Ascending aorta (tissue), 2 donors: ENCODE measurements at regions of chr6 and their contacts with region 1.

Region 1: GRCh38 chr6:99393698-99394531 is at the start of gene COQ3:
- DNase-seq: peak in 1 of 2 donors; percentile 79
- H3K4me3 ChIP-seq: peak within 1 kb of the TSS; percentile 76 to 98
- H3K27ac ChIP-seq: peak within 1 kb of the TSS; percentile 82 to 92
- H3K4me1 ChIP-seq: no peaks in the 10 kb centered on the region
- H3K27me3 ChIP-seq: no peaks in the 10 kb centered on the region
- CTCF ChIP-seq: no peak
- total RNA-seq, gene COQ3: 1.7 TPM

Region 2: GRCh38 chr6:99330159-99330558 is 63.8 kb before region 1 on chr6:
- intact Hi-C with region 1: loop called (anchors 5 kb)
- DNase-seq: no peak
- H3K4me3 ChIP-seq: no peak overlapping the region
- H3K27ac ChIP-seq: no peak overlapping the region
- H3K4me1 ChIP-seq: no peaks in the 10 kb centered on the region
- H3K27me3 ChIP-seq: no peaks in the 10 kb centered on the region
- CTCF ChIP-seq: peak; percentile 31 to 59 (median 58)

Region 3: DNA sequence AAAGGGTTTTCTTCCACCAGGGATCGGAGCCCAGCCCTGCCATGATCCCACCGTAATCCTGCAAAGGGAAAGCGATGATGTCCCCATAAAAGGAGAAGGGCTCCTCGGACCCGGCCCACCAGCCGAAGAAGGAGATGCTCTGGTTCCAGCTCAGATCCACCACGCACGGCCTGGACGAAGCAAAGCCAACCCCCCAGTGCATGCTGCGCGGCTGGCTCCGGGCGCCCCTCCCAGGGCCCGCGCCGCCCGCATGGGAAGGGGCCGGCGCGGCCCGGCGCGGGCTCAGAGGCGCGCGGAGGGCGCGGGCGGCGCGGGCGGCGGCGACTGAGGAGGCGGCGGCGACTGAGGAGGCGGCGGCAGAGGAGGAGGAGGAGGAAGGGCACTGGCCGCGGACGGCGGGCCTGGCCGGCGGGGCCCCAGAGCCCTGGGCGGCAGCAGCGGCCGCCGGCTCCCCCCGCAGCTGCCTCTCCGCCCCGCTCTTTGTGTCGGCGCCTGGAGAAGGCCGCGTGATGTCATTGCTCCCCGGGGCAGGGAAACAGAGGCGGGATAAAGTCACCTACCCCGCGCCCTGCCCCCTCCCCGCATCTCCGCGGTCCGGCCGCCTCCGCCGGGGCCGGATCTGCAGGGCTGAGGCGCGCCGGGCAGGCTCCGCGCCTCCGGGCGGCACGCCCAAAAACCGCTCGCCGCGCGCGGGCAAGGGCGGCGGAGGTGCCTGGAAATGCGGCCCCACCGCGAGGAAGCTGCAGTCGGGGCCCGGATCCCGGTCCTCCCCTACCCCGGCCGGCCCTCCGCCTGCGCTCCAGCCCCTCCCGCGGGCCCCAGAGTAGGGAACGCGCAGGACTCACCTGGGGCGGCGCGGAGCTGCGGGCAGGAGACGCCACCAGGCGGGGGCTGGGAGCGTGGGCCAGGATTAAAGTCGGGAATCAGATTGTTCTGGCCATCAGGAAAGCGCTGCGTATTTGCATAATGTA is 44.5 kb before region 1 on chr6 and contains the start of gene FAXC:
- intact Hi-C with region 1: loop called (anchors 5 kb)
- DNase-seq: no peak
- H3K4me3 ChIP-seq: peak within 1 kb of the TSS; percentile 75 to 77
- H3K27ac ChIP-seq: peak within 1 kb of the TSS; percentile 9 to 54
- H3K4me1 ChIP-seq: peaks cover 0 to 4% of the 10 kb centered on the region in 2 donors
- H3K27me3 ChIP-seq: no peaks in the 10 kb centered on the region
- CTCF ChIP-seq: peak in 1 of 3 experiments; percentile 33
- total RNA-seq, gene FAXC: not detected